Spleen (tissue), 13 donors: ENCODE measurements at regions of chr1 and their contacts with region 1.

Region 1: GRCh38 chr1:15261155-15262002 is 14.4 kb downstream of the FHAD1 start:
- DNase-seq: no peak
- H3K4me3 ChIP-seq: peak overlapping the region in 4 of 8 donors; percentile 7 to 47 (median 22)
- H3K27ac ChIP-seq: peak overlapping the region in 7 of 8 donors; percentile 42 to 81 (median 73)
- H3K4me1 ChIP-seq: peaks cover 8 to 39% (median 20%) of the 10 kb centered on the region in 6 donors
- H3K27me3 ChIP-seq: peaks cover 0 to 9% (median 0%) of the 10 kb centered on the region in 7 donors
- CTCF ChIP-seq: no peak
- POLR2A ChIP-seq: no peak

Region 2: GRCh38 chr1:15046487-15047165 is 214.8 kb before region 1 on chr1:
- intact Hi-C with region 1: no loop called
- DNase-seq: peak; percentile 83
- H3K4me3 ChIP-seq: no peak overlapping the region
- H3K27ac ChIP-seq: peak overlapping the region in 5 of 8 donors; percentile 15 to 65 (median 43)
- H3K4me1 ChIP-seq: peaks cover 0 to 64% (median 32%) of the 10 kb centered on the region in 6 donors
- H3K27me3 ChIP-seq: no peaks in the 10 kb centered on the region
- CTCF ChIP-seq: peak; percentile 42 to 87 (median 77)
- POLR2A ChIP-seq: no peak

Region 3: GRCh38 chr1:15152318-15153183 is 108.8 kb before region 1 on chr1:
- intact Hi-C with region 1: loop called (anchors 10 kb)
- DNase-seq: peak; percentile 78
- H3K4me3 ChIP-seq: peak overlapping the region; percentile 50 to 77 (median 66)
- H3K27ac ChIP-seq: peak overlapping the region; percentile 48 to 83 (median 76)
- H3K4me1 ChIP-seq: peaks cover 3 to 63% (median 45%) of the 10 kb centered on the region in 6 donors
- H3K27me3 ChIP-seq: peaks cover 0 to 50% (median 23%) of the 10 kb centered on the region in 7 donors
- CTCF ChIP-seq: peak in 8 of 11 experiments; percentile 8 to 59 (median 52)
- POLR2A ChIP-seq: no peak